Tibial artery (tissue), 4 donors: ENCODE measurements at regions of chr10 and their contacts with region 1.

Region 1: GRCh38 chr10:26043469-26043868 is 109.4 kb downstream of the MYO3A start:
- DNase-seq: no peak
- H3K4me3 ChIP-seq: no peak overlapping the region
- H3K27ac ChIP-seq: peak overlapping the region; percentile 60 to 73
- H3K4me1 ChIP-seq: peaks cover 4 to 50% (median 19%) of the 10 kb centered on the region in 4 donors
- H3K27me3 ChIP-seq: no peaks in the 10 kb centered on the region
- CTCF ChIP-seq: no peak

Region 2: DNA sequence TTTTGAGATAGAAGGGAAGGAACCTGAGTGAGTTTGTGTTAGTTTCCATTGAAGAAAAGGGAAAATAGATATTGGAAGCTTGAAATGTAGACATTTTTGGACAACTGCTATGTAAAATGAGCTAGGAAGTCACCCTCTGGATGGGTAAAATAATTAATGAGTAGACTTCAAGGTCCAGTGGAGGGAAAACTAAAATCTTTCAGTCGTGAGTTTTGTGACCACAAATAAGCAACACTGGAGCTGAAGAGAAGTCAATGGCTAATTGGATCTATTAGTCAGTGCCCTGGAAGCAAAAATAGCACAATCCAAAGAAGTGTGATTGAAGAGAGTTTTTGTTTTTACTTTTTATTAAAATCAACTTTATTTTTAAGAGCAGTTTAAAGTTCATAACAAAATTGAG is 14.0 kb after region 1 on chr10:
- intact Hi-C with region 1: loop called (anchors 1 kb)
- DNase-seq: no peak
- H3K4me3 ChIP-seq: no peak overlapping the region
- H3K27ac ChIP-seq: no peak overlapping the region
- H3K4me1 ChIP-seq: no peaks in the 10 kb centered on the region
- H3K27me3 ChIP-seq: no peaks in the 10 kb centered on the region
- CTCF ChIP-seq: no peak